ENCODE measurements at regions of chr6 and their contacts with region 1.

Region 1: GRCh38 chr6:52399511-52400312 is 20.4 kb upstream of the EFHC1 start:
- DNase-seq: no peak
- ATAC-seq: peak; percentile 50
- H3K4me3 ChIP-seq: no peak overlapping the region
- H3K27ac ChIP-seq: no peak overlapping the region
- H3K4me1 ChIP-seq: peaks cover 37% of the 10 kb centered on the region
- H3K27me3 ChIP-seq: no peaks in the 10 kb centered on the region
- CTCF ChIP-seq: peak; percentile 84 to 93 (median 90); a peak in 5 of 6 replicates
- EP300 ChIP-seq: no peak
- POLR2A ChIP-seq: no peak
- RAD21 ChIP-seq: peak; percentile 98

Region 2: DNA sequence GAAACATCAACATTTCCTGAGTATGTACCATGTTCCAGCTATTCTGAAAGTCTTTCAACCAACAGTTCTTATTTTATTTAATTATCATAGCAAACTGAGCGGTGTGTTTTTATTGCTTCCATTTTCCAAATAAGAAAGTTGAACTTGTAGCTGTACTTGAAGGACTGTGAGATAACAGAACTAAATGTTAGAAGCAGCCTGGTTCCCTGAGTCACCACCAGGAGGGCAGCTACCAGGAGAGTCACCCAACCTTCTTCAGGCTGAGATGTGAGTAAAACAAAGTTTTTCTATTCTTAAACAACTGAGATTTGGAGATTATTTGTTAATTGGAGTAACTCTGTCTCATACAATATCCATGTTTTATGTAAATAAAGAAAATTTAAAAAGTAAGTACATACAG is 715.7 kb before region 1 on chr6:
- CTCF ChIA-PET with region 1: no interaction called
- POLR2A ChIA-PET with region 1: no interaction called
- RAD21 ChIA-PET with region 1: no interaction called
- SMC1A ChIA-PET with region 1: no interaction called
- in situ Hi-C with region 1: no loop called
- intact Hi-C with region 1: no loop called
- DNase-seq: no peak
- ATAC-seq: no peak
- H3K4me3 ChIP-seq: no peak overlapping the region
- H3K27ac ChIP-seq: no peak overlapping the region
- H3K4me1 ChIP-seq: no peaks in the 10 kb centered on the region
- H3K27me3 ChIP-seq: no peaks in the 10 kb centered on the region
- CTCF ChIP-seq: no peak
- EP300 ChIP-seq: no peak
- POLR2A ChIP-seq: no peak
- RAD21 ChIP-seq: no peak

Region 3: DNA sequence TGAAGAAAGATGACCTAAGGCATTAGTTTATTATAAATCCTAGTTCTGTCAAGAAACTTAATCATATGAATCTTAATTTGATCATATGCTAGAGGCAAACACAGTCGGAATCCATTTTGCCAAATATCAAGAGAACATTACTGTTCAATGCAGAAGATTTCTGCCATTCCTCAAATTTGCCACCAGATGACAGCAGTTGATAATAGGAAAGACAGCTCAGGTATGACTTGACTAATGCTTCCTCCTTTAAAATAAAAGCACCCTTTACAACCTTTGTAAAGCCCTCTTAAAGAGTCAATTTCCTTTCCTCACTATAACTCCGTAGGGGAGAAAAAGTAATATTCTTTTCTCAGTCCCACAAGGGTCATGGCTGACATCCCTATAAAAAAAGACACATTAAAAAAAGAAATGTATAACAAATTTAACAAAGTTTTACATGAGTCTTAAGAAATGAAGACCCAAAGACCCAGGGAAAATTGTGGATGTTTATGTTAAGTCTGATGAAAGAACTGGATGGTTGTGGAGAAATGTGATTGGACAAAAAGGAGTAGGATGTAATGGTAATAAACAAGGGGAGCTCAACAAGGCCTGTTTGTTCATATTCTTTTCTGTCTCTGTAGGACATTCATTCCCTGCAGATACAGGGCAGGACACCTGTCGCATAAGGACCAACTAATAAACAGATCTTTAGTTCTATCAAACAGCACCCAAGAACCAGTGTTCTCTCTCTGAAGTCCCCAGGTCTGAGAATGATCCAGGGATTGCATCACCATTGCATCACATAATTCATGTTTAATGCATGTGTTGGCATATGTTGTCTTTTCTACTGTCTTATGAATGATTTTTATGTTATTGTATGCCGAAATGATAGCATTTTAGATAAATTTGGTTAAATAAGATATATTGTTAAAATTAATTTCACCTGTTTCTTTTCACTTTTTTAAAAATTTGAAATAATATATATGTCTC is 236.5 kb before region 1 on chr6:
- CTCF ChIA-PET with region 1: interaction called, 21 read pairs
- POLR2A ChIA-PET with region 1: no interaction called
- RAD21 ChIA-PET with region 1: interaction called, 5 read pairs
- SMC1A ChIA-PET with region 1: interaction called, 5 read pairs
- in situ Hi-C with region 1: loop called (anchors 5 kb)
- intact Hi-C with region 1: loop called (anchors 2 kb)
- DNase-seq: no peak
- ATAC-seq: peak; percentile 92
- H3K4me3 ChIP-seq: no peak overlapping the region
- H3K27ac ChIP-seq: no peak overlapping the region
- H3K4me1 ChIP-seq: peaks cover 9% of the 10 kb centered on the region; the same call in 1 of the 2 replicates
- H3K27me3 ChIP-seq: no peaks in the 10 kb centered on the region
- CTCF ChIP-seq: peak; percentile 84 to 95 (median 91)
- EP300 ChIP-seq: no peak
- POLR2A ChIP-seq: no peak
- RAD21 ChIP-seq: peak; percentile 100

Region 4: GRCh38 chr6:52297433-52297832 is 102.3 kb before region 1 on chr6:
- CTCF ChIA-PET with region 1: interaction called, 441 read pairs
- POLR2A ChIA-PET with region 1: interaction called, 5 read pairs
- RAD21 ChIA-PET with region 1: interaction called, 8 read pairs
- SMC1A ChIA-PET with region 1: interaction called, 33 read pairs
- in situ Hi-C with region 1: loop called (anchors 5 kb)
- intact Hi-C with region 1: no loop called
- DNase-seq: no peak
- ATAC-seq: peak; percentile 70
- H3K4me3 ChIP-seq: peak overlapping the region; percentile 19; the same call in 1 of the 2 replicates
- H3K27ac ChIP-seq: peak overlapping the region; percentile 86
- H3K4me1 ChIP-seq: peaks cover 51% of the 10 kb centered on the region
- H3K27me3 ChIP-seq: no peaks in the 10 kb centered on the region
- CTCF ChIP-seq: 0 out of 6 replicates have a peak, but pooled peaks of 1 of the 3 experiments have one; percentile 9
- EP300 ChIP-seq: no peak
- POLR2A ChIP-seq: no peak
- RAD21 ChIP-seq: peak; percentile 32; the same call in 1 of the 2 replicates

Region 5: GRCh38 chr6:52352239-52353008 is 47.3 kb before region 1 on chr6:
- CTCF ChIA-PET with region 1: interaction called, 8 read pairs
- POLR2A ChIA-PET with region 1: interaction called, 3 read pairs
- RAD21 ChIA-PET with region 1: interaction called, 14 read pairs
- SMC1A ChIA-PET with region 1: interaction called, 7 read pairs
- in situ Hi-C with region 1: no loop called
- intact Hi-C with region 1: no loop called
- DNase-seq: peak; percentile 79
- ATAC-seq: peak; percentile 93
- H3K4me3 ChIP-seq: no peak overlapping the region
- H3K27ac ChIP-seq: peak overlapping the region; percentile 6; the same call in 1 of the 2 replicates
- H3K4me1 ChIP-seq: peaks cover 32% of the 10 kb centered on the region
- H3K27me3 ChIP-seq: no peaks in the 10 kb centered on the region
- CTCF ChIP-seq: no peak
- EP300 ChIP-seq: peak; percentile 22 to 66; a peak in 1 of 4 replicates
- POLR2A ChIP-seq: no peak
- RAD21 ChIP-seq: no peak

Region 6: GRCh38 chr6:52377538-52378221 is 22.0 kb before region 1 on chr6:
- CTCF ChIA-PET with region 1: interaction called, 9 read pairs
- POLR2A ChIA-PET with region 1: interaction called, 3 read pairs
- RAD21 ChIA-PET with region 1: interaction called, 10 read pairs
- SMC1A ChIA-PET with region 1: interaction called, 11 read pairs
- in situ Hi-C with region 1: no loop called
- intact Hi-C with region 1: no loop called
- DNase-seq: no peak
- ATAC-seq: peak; percentile 67
- H3K4me3 ChIP-seq: peak overlapping the region; percentile 3; the same call in 1 of the 2 replicates
- H3K27ac ChIP-seq: peak overlapping the region; percentile 24; the same call in 1 of the 2 replicates
- H3K4me1 ChIP-seq: peaks cover 26% of the 10 kb centered on the region
- H3K27me3 ChIP-seq: no peaks in the 10 kb centered on the region
- CTCF ChIP-seq: no peak
- EP300 ChIP-seq: no peak
- POLR2A ChIP-seq: no peak
- RAD21 ChIP-seq: no peak

Measured in GM12878 (cell line).